ENCODE measurements at regions of chr16 and their contacts with region 1.

Region 1: GRCh38 chr16:75764154-75764768 is 38.0 kb upstream of the CPHXL start:
- DNase-seq: no peak
- ATAC-seq: peak; percentile 98
- H3K4me3 ChIP-seq: no peak overlapping the region
- H3K27ac ChIP-seq: no peak overlapping the region
- H3K4me1 ChIP-seq: no peaks in the 10 kb centered on the region
- H3K27me3 ChIP-seq: no peaks in the 10 kb centered on the region
- CTCF ChIP-seq: peak; percentile 79

Region 2: GRCh38 chr16:75471723-75472633 is 292.3 kb before region 1 on chr16:
- intact Hi-C with region 1: loop called (anchors 10 kb)
- DNase-seq: peak; percentile 55
- ATAC-seq: peak; percentile 96
- H3K4me3 ChIP-seq: no peak overlapping the region
- H3K27ac ChIP-seq: no peak overlapping the region
- H3K4me1 ChIP-seq: no peaks in the 10 kb centered on the region
- H3K27me3 ChIP-seq: no peaks in the 10 kb centered on the region
- CTCF ChIP-seq: peak; percentile 77

Region 3: GRCh38 chr16:76023835-76024234 is 259.6 kb after region 1 on chr16:
- intact Hi-C with region 1: no loop called
- DNase-seq: no peak
- ATAC-seq: no peak
- H3K4me3 ChIP-seq: no peak overlapping the region
- H3K27ac ChIP-seq: no peak overlapping the region
- H3K4me1 ChIP-seq: no peaks in the 10 kb centered on the region
- H3K27me3 ChIP-seq: no peaks in the 10 kb centered on the region
- CTCF ChIP-seq: no peak

Measured in upper lobe of right lung (tissue), 1 donor.